ENCODE measurements at regions of chr12 and their contacts with region 1.

Region 1: DNA sequence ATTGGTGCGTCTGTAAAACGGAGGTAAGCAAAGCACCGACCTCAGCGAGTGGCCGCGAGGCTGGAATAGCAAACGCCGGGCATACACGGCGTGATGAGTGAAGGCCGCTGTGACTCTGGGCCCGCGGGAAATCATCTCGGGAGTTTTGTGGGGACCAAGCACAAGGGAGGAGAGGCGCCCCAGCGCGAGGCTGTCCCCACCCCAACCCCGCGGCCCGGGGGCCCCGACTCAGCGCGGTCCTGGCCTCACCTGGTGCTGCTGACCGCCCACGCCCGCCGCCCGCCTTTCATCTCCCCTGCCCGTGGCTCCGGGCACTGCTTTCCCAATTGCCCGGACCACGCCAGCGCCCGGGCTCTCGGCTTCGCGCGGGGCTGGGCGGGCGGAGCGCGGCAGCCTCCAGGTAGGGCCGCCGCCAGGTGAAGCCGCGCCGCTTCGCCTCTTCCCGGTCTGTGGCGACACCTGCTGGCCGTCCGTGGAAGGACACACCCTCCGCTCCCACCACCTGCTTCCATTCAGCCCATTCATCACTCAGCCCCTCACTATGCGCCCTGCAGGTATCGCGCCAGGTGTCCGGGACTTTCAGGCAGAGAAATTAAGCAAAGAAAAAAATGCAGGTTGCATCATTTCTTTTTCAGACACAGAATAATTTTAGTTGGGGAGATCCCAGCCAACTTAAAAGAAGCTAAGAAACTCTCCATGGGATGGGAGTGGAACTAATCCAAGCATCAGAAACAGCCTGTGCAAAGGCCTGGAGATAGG is 360.4 kb downstream of the MED13L start:
- H3K4me3 Mint-ChIP-seq: no peak overlapping the region
- H3K27ac Mint-ChIP-seq: no peak overlapping the region
- H3K4me1 Mint-ChIP-seq: no peaks in the 10 kb centered on the region
- H3K27me3 Mint-ChIP-seq: peaks cover 48% of the 10 kb centered on the region

Region 2: DNA sequence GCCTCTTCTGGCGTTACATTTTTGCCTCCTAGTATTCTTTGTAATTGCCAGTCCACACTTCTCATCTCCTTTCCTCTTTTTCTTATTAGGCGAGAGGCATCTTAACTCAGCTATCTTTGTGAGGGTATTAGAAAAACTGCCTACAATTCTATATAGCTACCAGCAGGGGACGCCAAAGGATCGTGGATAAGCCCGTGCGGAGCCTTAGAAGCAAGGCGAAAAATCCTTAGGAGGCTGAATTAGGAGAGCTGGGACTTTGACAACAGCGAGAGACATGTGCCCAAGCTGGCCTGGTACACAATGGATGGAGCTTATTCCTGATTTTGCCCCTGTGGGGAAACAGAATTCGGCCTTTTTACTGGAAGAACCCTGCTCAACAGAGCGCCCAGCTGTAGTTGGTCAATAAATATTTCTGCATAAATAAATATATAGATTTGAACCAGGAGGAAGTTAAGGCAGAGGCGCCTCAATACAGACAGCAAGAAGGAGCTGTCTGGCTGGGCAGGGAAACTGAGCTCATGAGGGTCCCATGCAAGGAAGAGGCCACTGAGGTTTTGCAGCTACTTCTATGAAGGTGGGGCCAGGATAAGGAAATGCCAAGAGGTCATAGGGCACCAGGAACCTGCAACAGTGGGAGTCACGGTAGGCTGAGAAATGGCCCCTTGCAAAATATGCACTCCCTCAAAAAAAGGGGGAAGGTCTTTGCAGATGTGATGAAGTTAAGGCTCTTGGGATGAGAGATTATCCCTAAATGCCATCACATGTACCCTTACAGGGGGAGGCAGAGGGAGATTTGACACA is 1936.4 kb before region 1 on chr12:
- intact Hi-C with region 1: loop called (anchors 5 kb)
- H3K4me3 Mint-ChIP-seq: no peak overlapping the region
- H3K27ac Mint-ChIP-seq: no peak overlapping the region
- H3K4me1 Mint-ChIP-seq: no peaks in the 10 kb centered on the region
- H3K27me3 Mint-ChIP-seq: peaks cover 13% of the 10 kb centered on the region

Region 3: GRCh38 chr12:114625294-114625851 is 1291.7 kb before region 1 on chr12:
- intact Hi-C with region 1: loop called (anchors 10 kb)
- H3K4me3 Mint-ChIP-seq: no peak overlapping the region
- H3K27ac Mint-ChIP-seq: no peak overlapping the region
- H3K4me1 Mint-ChIP-seq: no peaks in the 10 kb centered on the region
- H3K27me3 Mint-ChIP-seq: no peaks in the 10 kb centered on the region

Region 4: GRCh38 chr12:114662512-114663177 is 1254.4 kb before region 1 on chr12:
- intact Hi-C with region 1: loop called (anchors 1 kb)
- H3K4me3 Mint-ChIP-seq: no peak overlapping the region
- H3K27ac Mint-ChIP-seq: no peak overlapping the region
- H3K4me1 Mint-ChIP-seq: peaks cover under 1% of the 10 kb centered on the region
- H3K27me3 Mint-ChIP-seq: peaks cover 55% of the 10 kb centered on the region